Body of pancreas (tissue), 4 donors: ENCODE measurements at regions of chr11 and their contacts with region 1.

Region 1: DNA sequence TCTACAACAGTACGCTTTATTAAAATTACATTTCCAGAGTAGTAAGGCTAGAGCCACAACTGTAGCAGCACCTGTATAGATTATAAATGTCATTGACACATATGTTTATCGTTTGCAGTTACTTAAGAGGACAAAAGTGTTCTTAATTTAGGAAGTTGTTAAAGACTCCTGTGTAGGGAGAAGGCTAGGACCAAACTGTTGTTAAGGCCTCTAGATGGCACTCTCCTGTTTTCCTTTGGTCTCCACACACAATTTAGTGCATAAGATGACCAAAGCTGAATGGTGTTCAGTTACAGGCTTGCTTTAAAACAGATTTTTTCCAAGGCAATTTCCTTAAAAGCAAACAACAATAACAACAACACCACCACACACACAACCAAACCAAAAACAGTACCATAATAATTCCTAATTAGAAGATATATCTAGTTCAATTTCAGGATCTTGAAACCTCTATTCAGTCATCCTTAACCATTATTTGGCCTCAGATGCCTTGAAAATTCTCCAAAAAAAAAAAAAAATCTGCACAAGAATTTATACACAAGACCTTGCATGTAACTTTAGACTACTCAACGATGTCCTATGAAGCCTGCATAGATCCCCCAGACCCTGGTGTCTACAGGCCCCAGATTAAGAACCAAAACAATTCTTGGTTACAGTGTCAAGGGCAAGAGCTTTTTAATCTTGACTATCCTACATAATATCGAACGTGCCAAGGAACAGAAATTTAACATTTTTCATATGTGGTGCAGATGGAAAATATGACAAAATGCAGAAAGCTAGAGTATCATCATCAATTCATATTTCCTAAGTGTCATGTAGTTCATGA is 42.6 kb upstream of the APOA1 start:
- DNase-seq: peak in 1 of 4 donors; percentile 49
- ATAC-seq: peak; percentile 75
- H3K4me3 ChIP-seq: no peak overlapping the region
- H3K27ac ChIP-seq: no peak overlapping the region
- H3K4me1 ChIP-seq: no peaks in the 10 kb centered on the region
- H3K27me3 ChIP-seq: no peaks in the 10 kb centered on the region
- CTCF ChIP-seq: peak; percentile 41 to 74 (median 64)
- POLR2A ChIP-seq: no peak

Region 2: GRCh38 chr11:117107701-117108590 is 227.9 kb after region 1 on chr11:
- intact Hi-C with region 1: loop called (anchors 5 kb)
- DNase-seq: no peak
- ATAC-seq: no peak
- H3K4me3 ChIP-seq: no peak overlapping the region
- H3K27ac ChIP-seq: no peak overlapping the region
- H3K4me1 ChIP-seq: no peaks in the 10 kb centered on the region
- H3K27me3 ChIP-seq: no peaks in the 10 kb centered on the region
- CTCF ChIP-seq: no peak
- POLR2A ChIP-seq: no peak

Region 3: GRCh38 chr11:117226388-117227385 is 346.7 kb after region 1 on chr11:
- intact Hi-C with region 1: loop called (anchors 10 kb)
- DNase-seq: peak; percentile 46 to 75 (median 68)
- ATAC-seq: peak; percentile 90
- H3K4me3 ChIP-seq: no peak overlapping the region
- H3K27ac ChIP-seq: no peak overlapping the region
- H3K4me1 ChIP-seq: peaks cover 34% of the 10 kb centered on the region
- H3K27me3 ChIP-seq: no peaks in the 10 kb centered on the region
- CTCF ChIP-seq: peak; percentile 64 to 93 (median 84)
- POLR2A ChIP-seq: no peak